ENCODE measurements at regions of chr10 and their contacts with region 1.

Region 1: GRCh38 chr10:70052462-70053217 is at the start of gene MACROH2A2:
- DNase-seq: peak; percentile 80

Region 2: DNA sequence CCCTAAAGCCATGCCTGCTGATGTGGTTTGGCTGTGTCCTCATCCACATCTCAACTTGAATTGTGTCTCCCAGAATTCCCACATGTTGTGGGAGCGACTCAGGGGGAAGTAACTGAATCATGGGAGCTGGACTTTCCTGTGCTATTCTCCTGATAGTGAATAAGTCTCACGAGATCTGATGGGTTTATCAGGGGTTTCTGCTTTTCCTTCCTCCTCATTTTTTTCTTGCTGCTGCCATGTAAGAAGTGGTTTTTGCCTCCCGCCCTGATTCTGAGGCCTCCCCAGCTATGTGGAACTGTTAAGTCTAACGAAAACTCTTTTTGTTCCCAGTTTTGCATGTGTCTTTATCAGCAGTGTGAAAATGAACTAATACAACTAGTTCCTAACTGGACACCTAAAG is 11.8 kb after region 1 on chr10:
- CTCF ChIA-PET with region 1: interaction called, 3 read pairs
- POLR2A ChIA-PET with region 1: interaction called, 10 read pairs
- DNase-seq: no peak

Measured in HEK293T (cell line).